Activated naive CD4-positive, alpha-beta T cell treated with anti-CD3 and anti-CD28 coated beads for 36 hours (primary cell): ENCODE measurements at regions of chr3 and their contacts with region 1.

Region 1: DNA sequence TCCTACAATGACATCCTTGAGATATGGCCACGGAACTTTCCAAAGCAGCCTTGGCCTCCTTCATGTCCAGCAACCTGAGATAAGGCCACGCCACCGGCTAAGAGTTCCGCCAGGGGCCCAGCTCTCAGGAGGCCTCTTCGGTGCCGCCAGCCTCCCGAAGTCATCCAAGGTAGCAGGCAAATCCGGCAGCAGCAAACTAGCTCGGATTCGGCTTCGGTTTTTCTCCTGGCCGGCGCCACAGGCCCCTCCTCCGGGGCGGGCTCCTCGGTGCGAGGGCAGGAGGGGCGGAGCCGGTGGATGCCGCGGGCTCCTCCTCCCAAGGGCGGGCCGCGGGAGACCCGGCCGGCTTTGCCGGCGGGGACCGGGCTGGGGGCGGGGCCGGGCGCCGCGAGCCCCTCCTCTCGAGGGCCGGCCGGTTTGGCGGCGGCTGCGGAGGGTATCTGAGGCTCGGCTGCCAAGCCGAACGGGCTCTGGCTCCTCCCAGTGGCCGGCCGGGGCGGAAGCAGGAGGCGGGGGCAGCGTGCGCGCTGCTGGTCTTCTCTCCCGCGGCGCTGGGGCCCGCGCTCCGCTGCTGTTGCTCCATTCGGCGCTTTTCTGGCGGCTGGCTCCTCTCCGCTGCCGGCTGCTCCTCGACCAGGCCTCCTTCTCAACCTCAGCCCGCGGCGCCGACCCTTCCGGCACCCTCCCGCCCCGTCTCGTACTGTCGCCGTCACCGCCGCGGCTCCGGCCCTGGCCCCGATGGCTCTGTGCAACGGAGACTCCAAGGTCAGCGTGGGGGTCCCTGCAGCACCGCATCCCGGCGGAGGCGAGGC is at the start of gene GMPS:
- DNase-seq: peak; percentile 94
- H3K4me3 Mint-ChIP-seq: peak within 1 kb of the TSS; percentile 90
- H3K27ac Mint-ChIP-seq: peak within 1 kb of the TSS; percentile 90
- H3K4me1 Mint-ChIP-seq: peaks cover 22% of the 10 kb centered on the region
- H3K27me3 Mint-ChIP-seq: no peaks in the 10 kb centered on the region
- total RNA-seq, gene GMPS: 114 to 123 TPM

Region 2: GRCh38 chr3:154323891-154324738 is 1546.2 kb before region 1 on chr3 and contains the start of gene DHX36:
- CTCF ChIA-PET with region 1: no interaction called
- intact Hi-C with region 1: loop called (anchors 2 kb)
- DNase-seq: peak; percentile 93
- H3K4me3 Mint-ChIP-seq: peak within 1 kb of the TSS; percentile 84
- H3K27ac Mint-ChIP-seq: peak within 1 kb of the TSS; percentile 96
- H3K4me1 Mint-ChIP-seq: peaks cover 31% of the 10 kb centered on the region
- H3K27me3 Mint-ChIP-seq: no peaks in the 10 kb centered on the region
- total RNA-seq, gene DHX36: 58.2 to 62.6 TPM

Region 3: GRCh38 chr3:155744626-155745324 is 125.6 kb before region 1 on chr3 and contains the start of gene PLCH1:
- CTCF ChIA-PET with region 1: no interaction called
- intact Hi-C with region 1: loop called (anchors 1 kb)
- DNase-seq: peak; percentile 74
- H3K4me3 Mint-ChIP-seq: peak within 1 kb of the TSS; percentile 83
- H3K27ac Mint-ChIP-seq: no peak within 1 kb of the TSS
- H3K4me1 Mint-ChIP-seq: peaks cover 9% of the 10 kb centered on the region
- H3K27me3 Mint-ChIP-seq: peaks cover 30% of the 10 kb centered on the region
- total RNA-seq, gene PLCH1: 0.21 to 0.27 TPM

Region 4: GRCh38 chr3:155805802-155806618 is 64.3 kb before region 1 on chr3 and contains the start of gene C3orf33:
- CTCF ChIA-PET with region 1: interaction called, 32 read pairs
- intact Hi-C with region 1: loop called (anchors 1 kb)
- DNase-seq: peak; percentile 78
- H3K4me3 Mint-ChIP-seq: peak within 1 kb of the TSS; percentile 85
- H3K27ac Mint-ChIP-seq: peak within 1 kb of the TSS; percentile 58
- H3K4me1 Mint-ChIP-seq: peaks cover 15% of the 10 kb centered on the region
- H3K27me3 Mint-ChIP-seq: no peaks in the 10 kb centered on the region
- total RNA-seq, gene C3orf33: 2.7 to 3.2 TPM

Region 5: GRCh38 chr3:157159762-157160657 is 1289.7 kb after region 1 on chr3 and contains the start of gene CCNL1:
- CTCF ChIA-PET with region 1: no interaction called
- intact Hi-C with region 1: loop called (anchors 2 kb)
- DNase-seq: peak; percentile 94
- H3K4me3 Mint-ChIP-seq: peak within 1 kb of the TSS; percentile 93
- H3K27ac Mint-ChIP-seq: peak within 1 kb of the TSS; percentile 99
- H3K4me1 Mint-ChIP-seq: peaks cover 43% of the 10 kb centered on the region
- H3K27me3 Mint-ChIP-seq: no peaks in the 10 kb centered on the region
- total RNA-seq, gene CCNL1: 206 to 214 TPM